ENCODE measurements at regions of chr10 and their contacts with region 1.

Region 1: GRCh38 chr10:73495884-73496674 is at the start of gene PPP3CB:
- H3K4me3 Mint-ChIP-seq: peak within 1 kb of the TSS; percentile 96
- H3K27ac Mint-ChIP-seq: peak within 1 kb of the TSS; percentile 100
- H3K4me1 Mint-ChIP-seq: peaks cover 58% of the 10 kb centered on the region
- H3K27me3 Mint-ChIP-seq: no peaks in the 10 kb centered on the region

Region 2: DNA sequence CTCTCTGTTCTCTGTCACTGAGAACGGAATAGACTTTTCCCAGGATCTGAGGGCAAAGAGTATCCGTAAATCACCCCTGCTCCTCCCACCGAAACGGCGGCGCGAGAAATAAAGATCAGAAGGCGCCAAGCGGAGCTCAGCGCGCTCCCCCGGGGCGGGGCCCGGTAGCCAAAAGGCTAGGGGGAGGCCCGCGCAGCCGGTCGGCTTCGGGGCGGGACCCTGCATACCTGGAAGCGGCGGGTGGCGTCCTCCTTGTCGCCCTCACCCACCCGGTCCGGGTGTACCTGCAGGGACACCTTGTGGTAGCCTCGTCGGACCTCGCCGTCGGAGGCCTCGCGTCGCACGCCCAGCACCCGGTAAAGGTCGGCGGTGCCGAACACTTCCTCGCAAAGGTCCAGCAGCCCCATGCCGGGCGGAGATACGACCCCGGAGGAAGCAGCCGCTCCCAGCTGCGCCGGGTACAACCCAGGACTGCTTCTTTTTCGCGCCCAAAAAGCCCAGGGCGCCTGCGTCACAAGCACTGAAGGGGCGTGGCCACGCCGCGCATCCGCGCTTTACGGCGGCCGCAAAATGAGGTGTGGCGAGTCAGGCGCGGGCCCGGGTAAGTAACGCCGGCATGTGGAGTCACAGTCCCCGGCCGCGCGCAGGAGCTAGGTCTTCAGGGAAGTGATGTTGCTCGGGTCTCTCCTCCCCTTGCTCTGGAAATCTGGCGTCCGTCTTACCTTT is 249.1 kb before region 1 on chr10 and contains the start of gene DNAJC9:
- intact Hi-C with region 1: loop called (anchors 10 kb)
- H3K4me3 Mint-ChIP-seq: peak within 1 kb of the TSS; percentile 88
- H3K27ac Mint-ChIP-seq: peak within 1 kb of the TSS; percentile 89
- H3K4me1 Mint-ChIP-seq: peaks cover 54% of the 10 kb centered on the region
- H3K27me3 Mint-ChIP-seq: no peaks in the 10 kb centered on the region

Region 3: DNA sequence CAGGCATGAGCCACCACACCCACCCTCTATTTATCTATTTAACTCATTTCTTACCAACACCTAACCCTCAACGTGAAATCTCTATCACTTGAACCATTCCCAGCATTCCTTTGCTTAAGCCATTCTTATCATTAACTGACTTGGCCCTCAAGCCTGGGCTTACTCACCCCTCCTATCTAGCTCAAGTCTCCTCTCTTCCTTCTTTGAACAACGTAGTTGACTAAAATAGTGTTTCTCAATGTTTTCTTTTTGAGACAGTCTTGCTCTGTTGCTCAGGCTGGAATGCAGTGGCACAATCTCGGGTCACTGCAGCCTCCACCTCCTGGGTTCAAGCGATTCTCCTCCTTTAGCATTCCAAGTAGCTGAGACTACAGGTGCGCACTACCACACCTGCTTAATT is 89.2 kb before region 1 on chr10:
- intact Hi-C with region 1: loop called (anchors 10 kb)
- H3K4me3 Mint-ChIP-seq: no peak overlapping the region
- H3K27ac Mint-ChIP-seq: no peak overlapping the region
- H3K4me1 Mint-ChIP-seq: peaks cover 41% of the 10 kb centered on the region
- H3K27me3 Mint-ChIP-seq: no peaks in the 10 kb centered on the region

Region 4: GRCh38 chr10:73506491-73506890 is 10.4 kb after region 1 on chr10:
- intact Hi-C with region 1: no loop called
- H3K4me3 Mint-ChIP-seq: no peak overlapping the region
- H3K27ac Mint-ChIP-seq: no peak overlapping the region
- H3K4me1 Mint-ChIP-seq: peaks cover 17% of the 10 kb centered on the region
- H3K27me3 Mint-ChIP-seq: no peaks in the 10 kb centered on the region

Region 5: GRCh38 chr10:73827346-73828089 is 331.4 kb after region 1 on chr10:
- intact Hi-C with region 1: no loop called
- H3K4me3 Mint-ChIP-seq: no peak overlapping the region
- H3K27ac Mint-ChIP-seq: no peak overlapping the region
- H3K4me1 Mint-ChIP-seq: peaks cover 3% of the 10 kb centered on the region
- H3K27me3 Mint-ChIP-seq: no peaks in the 10 kb centered on the region